ENCODE measurements at regions of chr19 and their contacts with region 1.

Region 1: GRCh38 chr19:47035127-47036096 is 13.0 kb downstream of the TMEM160 start:
- DNase-seq: peak; percentile 91
- ATAC-seq: peak; percentile 96

Region 2: GRCh38 chr19:46753420-46754155 is 281.8 kb before region 1 on chr19:
- intact Hi-C with region 1: loop called (anchors 10 kb)
- DNase-seq: peak; percentile 64
- ATAC-seq: peak; percentile 16

Region 3: GRCh38 chr19:47124937-47125668 is 89.7 kb after region 1 on chr19:
- intact Hi-C with region 1: loop called (anchors 10 kb)
- DNase-seq: no peak
- ATAC-seq: peak; percentile 80

Region 4: GRCh38 chr19:47190167-47190727 is 154.8 kb after region 1 on chr19:
- intact Hi-C with region 1: no loop called
- DNase-seq: peak; percentile 55
- ATAC-seq: peak; percentile 54

Region 5: DNA sequence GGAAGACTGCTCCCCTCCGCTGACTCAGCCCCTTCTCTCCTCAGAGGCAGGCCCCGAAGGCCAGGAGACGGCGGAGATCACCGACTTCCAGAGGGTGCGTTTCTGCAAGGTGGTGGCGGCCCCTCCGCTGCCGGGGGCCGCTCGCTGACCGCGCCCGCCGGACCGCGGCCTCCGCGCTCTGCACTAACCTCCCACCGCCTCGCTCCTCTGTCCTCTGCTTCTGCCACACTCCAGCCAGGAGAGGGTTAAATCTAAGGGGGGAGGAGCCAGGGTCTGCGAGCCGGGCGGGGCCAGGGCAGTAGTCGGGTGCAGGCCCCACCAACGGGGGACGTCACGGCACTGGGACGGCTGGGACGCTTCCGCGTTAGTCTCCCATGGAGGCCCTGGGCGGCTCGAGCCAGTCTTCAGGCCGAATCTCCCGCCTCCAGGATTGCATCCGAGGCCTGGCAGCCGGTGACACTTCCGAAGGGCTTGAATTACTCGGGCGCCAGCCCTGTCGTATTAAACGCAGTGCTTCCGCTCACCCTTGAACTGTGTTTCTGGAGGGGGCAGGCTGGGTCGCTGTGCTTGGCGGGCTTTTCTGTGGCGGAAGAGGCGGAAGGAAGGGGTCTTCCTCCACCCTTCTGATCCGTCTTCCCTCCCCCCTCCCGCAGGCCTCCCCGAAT is 238.0 kb after region 1 on chr19:
- intact Hi-C with region 1: no loop called
- DNase-seq: peak; percentile 95
- ATAC-seq: peak; percentile 79

Region 6: DNA sequence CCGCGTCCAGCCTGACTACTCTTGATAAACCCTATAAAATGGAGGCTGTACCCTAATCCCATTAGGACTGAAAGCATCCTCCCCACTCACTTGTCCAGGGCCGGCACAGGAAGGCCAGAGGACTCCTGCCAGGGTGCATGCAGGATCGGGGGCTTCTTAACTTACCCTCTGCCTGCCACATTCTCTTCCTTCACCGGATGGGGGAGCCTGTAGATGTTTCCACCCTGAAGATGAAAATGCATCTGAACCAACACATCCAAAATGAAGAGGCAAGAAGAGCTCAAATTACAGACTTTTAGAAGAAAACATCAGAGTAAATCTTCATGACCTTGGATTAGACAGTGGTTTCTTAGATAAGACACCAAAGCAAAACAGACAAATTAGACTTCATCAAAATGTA is 505.3 kb after region 1 on chr19:
- intact Hi-C with region 1: no loop called
- DNase-seq: no peak
- ATAC-seq: no peak

Measured in Right ventricle myocardium superior (tissue), 1 donor.